ENCODE measurements at regions of chr5 and their contacts with region 1.

Region 1: DNA sequence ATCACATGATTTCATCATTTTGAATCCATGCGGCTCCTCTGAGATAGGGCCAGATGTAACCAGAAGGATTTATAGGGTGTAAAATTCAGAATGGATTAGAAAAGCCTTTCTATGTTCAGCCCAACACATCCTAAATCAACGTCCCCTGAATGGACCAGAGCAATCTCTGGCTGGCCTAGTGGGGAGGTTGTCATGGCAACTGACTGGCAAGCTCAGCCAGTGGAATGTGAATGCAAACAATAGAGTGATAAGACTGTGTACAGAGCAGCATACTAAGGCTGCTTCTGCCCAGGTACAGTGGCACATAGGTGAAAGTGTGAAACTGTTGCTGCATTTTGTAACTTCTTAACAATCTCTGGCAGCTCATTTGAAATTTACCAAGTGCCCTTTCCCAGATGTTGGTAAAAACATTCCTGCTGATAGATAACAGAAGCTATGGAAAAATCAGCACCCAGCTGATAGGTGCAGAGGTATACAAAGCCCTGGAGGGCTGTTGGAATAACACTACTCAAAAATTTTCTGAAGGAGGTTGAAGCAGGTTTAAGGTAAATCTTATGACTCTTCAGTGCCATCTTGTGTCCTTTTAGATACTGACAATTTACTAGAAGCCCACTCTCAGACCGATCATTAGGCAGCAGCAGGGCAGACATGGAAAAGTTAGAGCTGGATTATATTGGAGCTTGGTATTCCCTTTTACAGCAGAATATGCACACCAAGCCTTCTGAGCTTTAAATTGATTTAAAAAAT is 267.2 kb downstream of the RAB3C start:
- DNase-seq: no peak
- H3K4me3 ChIP-seq: no peak overlapping the region
- H3K27ac ChIP-seq: no peak overlapping the region
- H3K4me1 ChIP-seq: no peaks in the 10 kb centered on the region
- H3K27me3 ChIP-seq: no peaks in the 10 kb centered on the region
- CTCF ChIP-seq: peak in 2 of 3 experiments; percentile 30
- EP300 ChIP-seq: no peak
- POLR2A ChIP-seq: no peak

Region 2: GRCh38 chr5:58498340-58498942 is 351.7 kb before region 1 on chr5:
- intact Hi-C with region 1: loop called (anchors 10 kb)
- DNase-seq: no peak
- H3K4me3 ChIP-seq: no peak overlapping the region
- H3K27ac ChIP-seq: no peak overlapping the region
- H3K4me1 ChIP-seq: no peaks in the 10 kb centered on the region
- H3K27me3 ChIP-seq: no peaks in the 10 kb centered on the region
- CTCF ChIP-seq: peak; percentile 13 to 57 (median 49)
- EP300 ChIP-seq: no peak
- POLR2A ChIP-seq: no peak